ENCODE measurements at regions of chr2 and their contacts with region 1.

Region 1: GRCh38 chr2:33008716-33009115 is 62.0 kb downstream of the LTBP1 start:
- DNase-seq: no peak
- ATAC-seq: no peak
- H3K4me3 ChIP-seq: no peak overlapping the region
- H3K27ac ChIP-seq: no peak overlapping the region
- H3K4me1 ChIP-seq: peaks cover 9% of the 10 kb centered on the region
- H3K27me3 ChIP-seq: no peaks in the 10 kb centered on the region
- CTCF ChIP-seq: no peak
- POLR2A ChIP-seq: no peak
- RAD21 ChIP-seq: no peak

Region 2: GRCh38 chr2:32632089-32632488 is 376.6 kb before region 1 on chr2:
- CTCF ChIA-PET with region 1: no interaction called
- POLR2A ChIA-PET with region 1: no interaction called
- dilution Hi-C with region 1: no loop called
- in situ Hi-C with region 1: no loop called
- intact Hi-C with region 1: no loop called
- DNase-seq: peak; percentile 63
- ATAC-seq: no peak
- H3K4me3 ChIP-seq: no peak overlapping the region
- H3K27ac ChIP-seq: no peak overlapping the region
- H3K4me1 ChIP-seq: no peaks in the 10 kb centered on the region
- H3K27me3 ChIP-seq: no peaks in the 10 kb centered on the region
- CTCF ChIP-seq: no peak
- POLR2A ChIP-seq: no peak
- RAD21 ChIP-seq: no peak

Region 3: DNA sequence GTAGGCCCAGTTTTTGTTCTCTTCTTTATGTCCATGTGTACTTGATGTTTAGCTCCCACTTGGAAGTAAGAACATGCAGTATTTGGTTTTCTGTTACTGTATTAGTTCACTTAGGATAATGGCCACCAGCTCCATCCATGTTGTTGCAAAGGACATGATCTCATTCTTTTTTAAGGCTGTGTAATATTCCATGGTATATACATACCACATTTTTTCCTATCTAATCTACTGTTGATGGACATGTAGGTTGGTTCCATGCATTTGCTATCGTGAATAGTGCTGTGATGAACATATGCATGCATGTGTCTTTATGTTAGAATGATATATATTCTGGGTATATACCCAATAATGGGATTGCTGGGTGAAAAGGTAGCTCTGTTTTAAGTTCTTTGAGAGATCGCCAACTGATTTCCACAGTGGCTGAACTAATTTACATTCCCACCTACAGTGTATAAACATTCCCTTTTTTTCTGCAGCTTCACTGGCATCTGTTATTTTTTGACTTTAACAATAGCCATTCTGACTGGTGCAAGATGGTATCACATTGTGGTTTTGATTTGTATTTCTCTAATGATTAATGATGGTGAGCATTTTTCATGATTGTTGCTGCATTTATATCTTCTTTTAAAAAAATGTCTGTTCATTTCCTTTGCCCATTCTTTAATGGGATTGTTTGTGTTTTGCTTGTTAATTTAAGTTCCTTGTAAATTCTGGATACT is 39.1 kb before region 1 on chr2:
- CTCF ChIA-PET with region 1: interaction called, 5 read pairs
- POLR2A ChIA-PET with region 1: no interaction called
- dilution Hi-C with region 1: no loop called
- in situ Hi-C with region 1: no loop called
- intact Hi-C with region 1: loop called (anchors 5 kb)
- DNase-seq: no peak
- ATAC-seq: no peak
- H3K4me3 ChIP-seq: no peak overlapping the region
- H3K27ac ChIP-seq: no peak overlapping the region
- H3K4me1 ChIP-seq: no peaks in the 10 kb centered on the region
- H3K27me3 ChIP-seq: no peaks in the 10 kb centered on the region
- CTCF ChIP-seq: no peak
- POLR2A ChIP-seq: no peak
- RAD21 ChIP-seq: no peak

Region 4: DNA sequence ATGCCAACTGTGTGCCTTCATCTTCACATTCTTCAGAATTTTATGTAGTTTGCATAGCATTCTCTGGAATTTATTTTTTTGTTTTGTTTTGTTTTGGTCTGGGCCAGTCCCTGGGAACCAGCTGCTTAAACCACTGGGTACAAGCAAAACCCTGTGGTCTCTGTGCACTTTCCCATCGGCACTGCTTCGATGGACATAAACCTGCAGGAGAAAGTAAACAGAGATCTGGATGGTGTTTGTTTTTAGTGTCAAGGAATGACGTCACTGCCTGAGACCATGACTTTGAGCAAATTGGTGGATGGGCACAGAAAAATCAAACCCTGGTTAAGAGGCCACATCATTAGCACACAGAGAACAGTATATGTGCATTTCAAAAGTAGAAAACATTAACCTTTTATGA is 403.0 kb after region 1 on chr2:
- CTCF ChIA-PET with region 1: no interaction called
- POLR2A ChIA-PET with region 1: no interaction called
- dilution Hi-C with region 1: no loop called
- in situ Hi-C with region 1: no loop called
- intact Hi-C with region 1: no loop called
- DNase-seq: peak; percentile 93
- ATAC-seq: peak; percentile 88
- H3K4me3 ChIP-seq: no peak overlapping the region
- H3K27ac ChIP-seq: no peak overlapping the region
- H3K4me1 ChIP-seq: peaks cover 5% of the 10 kb centered on the region
- H3K27me3 ChIP-seq: no peaks in the 10 kb centered on the region
- CTCF ChIP-seq: no peak
- POLR2A ChIP-seq: no peak
- RAD21 ChIP-seq: no peak

Measured in IMR-90 (cell line).